Activated CD4-positive, alpha-beta memory T cell treated with anti-CD3 and anti-CD28 coated beads for 36 hours (primary cell): ENCODE measurements at regions of chr6 and their contacts with region 1.

Region 1: DNA sequence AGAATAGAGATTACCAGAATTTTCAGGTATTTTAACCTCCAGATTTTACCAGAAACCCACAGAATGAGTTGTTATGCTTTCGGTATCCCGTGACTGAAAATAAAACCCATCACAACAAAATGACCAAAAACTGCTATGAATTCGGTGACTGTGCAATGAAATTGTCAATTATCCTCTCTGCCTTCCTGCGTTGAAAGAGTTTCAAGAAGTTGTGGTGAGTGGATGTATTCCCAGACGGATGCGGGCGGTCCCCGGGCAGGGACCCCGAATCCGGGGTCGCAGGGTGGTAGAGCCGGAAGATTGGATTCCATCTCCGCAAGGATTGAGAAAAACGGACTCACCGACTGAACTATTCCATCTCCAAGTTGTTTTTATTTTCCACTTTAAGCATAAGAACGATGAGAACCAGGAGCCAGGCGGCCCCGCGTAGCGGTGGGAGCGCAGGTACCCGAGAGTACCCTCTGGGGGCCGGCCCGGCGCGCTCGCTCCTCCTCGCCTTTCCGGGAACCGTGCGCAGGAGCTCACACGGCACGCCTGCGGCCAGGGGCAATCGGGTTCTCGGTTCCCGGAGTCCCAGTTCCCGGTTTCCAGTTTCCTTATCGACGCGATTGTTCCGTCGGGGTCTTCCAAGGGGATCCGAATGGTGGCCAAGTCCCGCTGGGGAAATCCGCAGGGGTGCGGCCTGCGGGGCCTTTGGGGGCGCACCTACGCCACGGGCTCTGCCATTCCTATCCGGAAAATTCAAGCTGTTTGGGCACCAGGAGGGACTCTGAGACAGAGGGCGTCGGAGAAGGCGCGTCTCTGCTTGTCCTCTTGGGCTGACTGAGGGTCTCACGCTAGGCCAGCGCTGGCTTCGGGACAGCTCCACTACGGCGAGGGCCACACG is 104.9 kb upstream of the PRDM1 start:
- DNase-seq: peak; percentile 60
- H3K4me3 Mint-ChIP-seq: peak overlapping the region; percentile 78
- H3K27ac Mint-ChIP-seq: peak overlapping the region; percentile 93
- H3K4me1 Mint-ChIP-seq: peaks cover 53% of the 10 kb centered on the region
- H3K27me3 Mint-ChIP-seq: peaks cover 32% of the 10 kb centered on the region

Region 2: DNA sequence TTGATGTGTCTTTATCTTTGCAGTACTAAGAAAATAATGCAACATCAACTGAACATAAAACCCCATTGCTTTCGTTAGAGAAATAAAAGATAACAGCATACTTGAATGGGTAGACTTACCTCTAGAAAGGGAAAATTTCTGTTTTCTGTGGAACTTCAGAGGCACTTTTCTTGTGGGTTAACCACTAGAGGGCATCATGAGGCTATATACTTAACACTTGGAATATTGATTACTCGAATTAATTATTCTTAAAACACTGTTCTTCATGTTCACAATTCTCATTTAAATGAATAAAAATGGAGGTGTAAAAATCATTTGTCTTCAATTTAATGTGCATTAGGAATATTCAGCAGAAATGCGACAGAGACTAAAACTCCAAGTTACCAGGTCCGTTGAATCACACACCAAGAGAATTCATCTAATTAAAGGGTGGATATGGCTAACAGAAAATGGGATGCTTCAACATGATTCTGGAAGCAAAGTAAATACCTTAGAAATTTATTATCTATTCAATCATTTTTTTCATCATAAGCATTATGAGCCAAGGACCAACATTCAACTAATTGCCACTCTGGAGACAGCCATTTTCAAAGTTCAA is 247.6 kb before region 1 on chr6:
- CTCF ChIA-PET with region 1: no interaction called
- POLR2A ChIA-PET with region 1: no interaction called
- intact Hi-C with region 1: loop called (anchors 2 kb)
- DNase-seq: no peak
- H3K4me3 Mint-ChIP-seq: no peak overlapping the region
- H3K27ac Mint-ChIP-seq: no peak overlapping the region
- H3K4me1 Mint-ChIP-seq: no peaks in the 10 kb centered on the region
- H3K27me3 Mint-ChIP-seq: no peaks in the 10 kb centered on the region

Region 3: DNA sequence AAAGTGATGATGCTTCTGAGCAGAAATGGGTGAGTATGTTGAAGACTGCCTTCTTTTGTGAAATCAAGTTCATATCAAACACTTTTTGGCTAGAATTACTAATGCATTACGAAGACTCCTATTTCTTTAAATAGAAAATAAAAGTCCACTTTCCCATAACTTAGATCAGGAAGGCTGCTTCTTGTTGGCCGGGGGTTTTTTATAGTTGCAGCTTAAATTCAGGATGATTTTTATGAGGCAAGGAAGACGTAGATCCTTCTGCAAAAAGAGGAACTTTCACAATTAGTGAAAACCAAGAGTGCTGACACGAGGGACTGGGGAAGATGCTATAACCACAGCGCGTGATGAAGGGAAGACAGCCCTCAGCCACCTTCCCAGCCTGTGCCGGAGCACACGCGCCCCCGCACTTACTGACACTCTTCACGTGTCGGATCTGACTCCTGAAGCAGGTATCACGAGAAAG is 101.2 kb before region 1 on chr6:
- CTCF ChIA-PET with region 1: no interaction called
- POLR2A ChIA-PET with region 1: no interaction called
- intact Hi-C with region 1: loop called (anchors 1 kb)
- DNase-seq: peak; percentile 75
- H3K4me3 Mint-ChIP-seq: peak overlapping the region; percentile 31
- H3K27ac Mint-ChIP-seq: peak overlapping the region; percentile 44
- H3K4me1 Mint-ChIP-seq: peaks cover 26% of the 10 kb centered on the region
- H3K27me3 Mint-ChIP-seq: peaks cover 37% of the 10 kb centered on the region

Region 4: DNA sequence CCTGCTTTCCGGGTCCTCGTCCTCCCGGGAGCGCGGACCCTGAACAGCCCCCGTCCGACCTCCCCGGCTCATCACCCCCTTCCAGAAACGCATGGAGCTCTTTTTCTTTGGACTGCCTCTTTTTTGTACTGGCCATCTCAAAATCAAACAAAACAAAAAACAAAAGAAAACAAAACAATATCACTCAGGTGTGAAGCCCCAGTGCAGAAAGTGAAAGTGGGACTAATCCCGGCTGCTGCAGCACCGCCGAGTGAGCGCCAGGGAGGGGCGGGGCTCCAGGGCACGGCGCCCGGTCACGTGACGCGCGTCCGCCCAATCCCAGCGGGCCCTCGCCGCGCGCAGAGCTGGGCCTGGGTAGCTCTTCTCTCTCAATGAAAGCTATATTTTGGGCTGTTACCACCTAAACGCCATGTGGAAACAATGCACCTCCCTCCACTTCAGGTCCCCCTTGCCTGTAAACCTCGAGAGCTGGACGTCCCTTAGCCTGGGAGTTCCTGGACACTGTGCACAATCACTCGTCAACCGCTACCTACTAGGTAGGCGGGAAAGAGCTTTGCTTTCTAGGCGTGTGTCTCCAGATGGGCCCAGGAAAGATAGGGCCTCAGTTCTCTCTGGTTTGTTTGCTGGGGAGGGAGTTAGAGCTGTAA is 11.2 kb after region 1 on chr6:
- CTCF ChIA-PET with region 1: interaction called, 23 read pairs
- POLR2A ChIA-PET with region 1: interaction called, 59 read pairs
- intact Hi-C with region 1: loop called (anchors 1 kb)
- DNase-seq: peak; percentile 92
- H3K4me3 Mint-ChIP-seq: peak overlapping the region; percentile 88
- H3K27ac Mint-ChIP-seq: peak overlapping the region; percentile 81
- H3K4me1 Mint-ChIP-seq: peaks cover 32% of the 10 kb centered on the region
- H3K27me3 Mint-ChIP-seq: peaks cover 39% of the 10 kb centered on the region

Region 5: DNA sequence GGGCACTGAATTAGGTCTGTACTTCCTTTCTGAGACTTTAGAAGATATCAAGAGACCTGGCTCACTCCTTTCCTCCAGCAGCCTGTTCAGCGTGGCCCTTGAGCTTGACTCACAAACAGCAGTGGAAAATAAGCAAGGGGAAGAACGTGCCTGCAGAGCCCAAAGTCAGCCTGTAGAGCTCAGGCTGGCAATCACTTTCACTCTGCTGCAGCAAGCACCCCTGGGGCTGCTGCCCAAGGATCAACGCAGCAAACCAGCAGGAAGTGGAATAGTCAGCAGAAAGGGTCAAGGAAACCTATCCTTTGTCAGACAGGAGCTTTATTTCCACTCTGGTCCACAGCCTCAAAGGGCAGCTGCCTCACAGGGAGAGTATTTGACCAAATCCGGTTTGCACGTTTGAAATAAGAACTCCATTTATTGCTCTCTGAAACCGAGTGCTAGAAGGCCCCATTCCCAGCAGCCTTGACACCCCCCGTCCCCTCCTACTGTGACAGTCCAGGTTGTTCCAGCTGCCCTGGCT is 182.3 kb after region 1 on chr6:
- CTCF ChIA-PET with region 1: interaction called, 3 read pairs
- POLR2A ChIA-PET with region 1: interaction called, 6 read pairs
- intact Hi-C with region 1: loop called (anchors 1 kb)
- DNase-seq: peak; percentile 80
- H3K4me3 Mint-ChIP-seq: peak overlapping the region; percentile 64
- H3K27ac Mint-ChIP-seq: peak overlapping the region; percentile 91
- H3K4me1 Mint-ChIP-seq: peaks cover 60% of the 10 kb centered on the region
- H3K27me3 Mint-ChIP-seq: no peaks in the 10 kb centered on the region